CD14-positive monocyte (primary cell): ENCODE measurements at regions of chr13 and their contacts with region 1.

Region 1: GRCh38 chr13:29758531-29759114 is 91.8 kb downstream of the UBL3 start:
- DNase-seq: peak; percentile 91 to 98 (median 93)
- H3K4me3 ChIP-seq: peak overlapping the region in 1 of 3 experiments; percentile 16
- H3K4me3 Mint-ChIP-seq: peak overlapping the region in 1 of 2 donors; percentile 71
- H3K27ac ChIP-seq: peak overlapping the region in 1 of 2 donors; percentile 60
- H3K27ac Mint-ChIP-seq: peak overlapping the region; percentile 77 to 94 (median 88)
- H3K4me1 ChIP-seq: peaks cover 11 to 15% of the 10 kb centered on the region in 2 donors
- H3K4me1 Mint-ChIP-seq: peaks cover 20% of the 10 kb centered on the region
- H3K27me3 ChIP-seq: peaks cover 5 to 20% of the 10 kb centered on the region in 2 donors
- H3K27me3 Mint-ChIP-seq: peaks cover 16 to 38% (median 27%) of the 10 kb centered on the region in 3 donors
- CTCF ChIP-seq: no peak

Region 2: GRCh38 chr13:29323954-29324353 is 434.7 kb before region 1 on chr13:
- intact Hi-C with region 1: no loop called
- DNase-seq: no peak
- H3K4me3 ChIP-seq: no peak overlapping the region
- H3K4me3 Mint-ChIP-seq: no peak overlapping the region
- H3K27ac ChIP-seq: no peak overlapping the region
- H3K27ac Mint-ChIP-seq: no peak overlapping the region
- H3K4me1 ChIP-seq: no peaks in the 10 kb centered on the region
- H3K4me1 Mint-ChIP-seq: no peaks in the 10 kb centered on the region
- H3K27me3 ChIP-seq: no peaks in the 10 kb centered on the region
- H3K27me3 Mint-ChIP-seq: peaks cover 0 to 10% (median 2%) of the 10 kb centered on the region in 3 donors
- CTCF ChIP-seq: no peak

Region 3: GRCh38 chr13:29605860-29606526 is 152.6 kb before region 1 on chr13:
- intact Hi-C with region 1: loop called in 1 of 2 experiments (anchors 10 kb)
- DNase-seq: no peak
- H3K4me3 ChIP-seq: no peak overlapping the region
- H3K4me3 Mint-ChIP-seq: no peak overlapping the region
- H3K27ac ChIP-seq: no peak overlapping the region
- H3K27ac Mint-ChIP-seq: no peak overlapping the region
- H3K4me1 ChIP-seq: no peaks in the 10 kb centered on the region
- H3K4me1 Mint-ChIP-seq: no peaks in the 10 kb centered on the region
- H3K27me3 ChIP-seq: no peaks in the 10 kb centered on the region
- H3K27me3 Mint-ChIP-seq: peaks cover 5 to 10% (median 9%) of the 10 kb centered on the region in 3 donors
- CTCF ChIP-seq: no peak

Region 4: GRCh38 chr13:29621051-29621757 is 137.4 kb before region 1 on chr13:
- intact Hi-C with region 1: no loop called
- DNase-seq: peak in 1 of 3 donors; percentile 12
- H3K4me3 ChIP-seq: no peak overlapping the region
- H3K4me3 Mint-ChIP-seq: no peak overlapping the region
- H3K27ac ChIP-seq: no peak overlapping the region
- H3K27ac Mint-ChIP-seq: no peak overlapping the region
- H3K4me1 ChIP-seq: no peaks in the 10 kb centered on the region
- H3K4me1 Mint-ChIP-seq: no peaks in the 10 kb centered on the region
- H3K27me3 ChIP-seq: no peaks in the 10 kb centered on the region
- H3K27me3 Mint-ChIP-seq: peaks cover 9 to 11% (median 9%) of the 10 kb centered on the region in 3 donors
- CTCF ChIP-seq: no peak

Region 5: DNA sequence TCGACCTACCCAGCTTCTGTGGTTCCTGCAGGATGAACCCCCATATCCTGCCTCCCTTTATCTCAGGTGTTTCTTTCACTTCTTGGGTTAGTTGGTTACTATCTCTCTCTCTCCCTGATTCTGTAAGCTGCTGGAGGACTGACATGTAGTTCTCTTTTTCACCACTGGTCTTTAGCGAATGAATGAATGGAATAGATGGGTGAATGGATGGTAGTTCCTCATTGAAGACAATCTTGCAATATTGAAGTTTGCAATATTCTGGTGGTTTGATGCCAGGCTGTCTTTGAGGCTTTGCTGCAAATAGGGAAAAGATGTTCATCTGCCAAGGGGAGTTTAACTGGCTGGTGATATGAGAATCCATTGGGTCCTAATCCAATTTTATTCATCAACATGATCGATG is 28.4 kb before region 1 on chr13:
- intact Hi-C with region 1: no loop called
- DNase-seq: no peak
- H3K4me3 ChIP-seq: no peak overlapping the region
- H3K4me3 Mint-ChIP-seq: no peak overlapping the region
- H3K27ac ChIP-seq: no peak overlapping the region
- H3K27ac Mint-ChIP-seq: no peak overlapping the region
- H3K4me1 ChIP-seq: no peaks in the 10 kb centered on the region
- H3K4me1 Mint-ChIP-seq: no peaks in the 10 kb centered on the region
- H3K27me3 ChIP-seq: peaks cover 4 to 11% of the 10 kb centered on the region in 2 donors
- H3K27me3 Mint-ChIP-seq: peaks cover 17 to 33% (median 29%) of the 10 kb centered on the region in 3 donors
- CTCF ChIP-seq: peak; percentile 27

Region 6: GRCh38 chr13:29923554-29924481 is 165.2 kb after region 1 on chr13:
- intact Hi-C with region 1: loop called in 1 of 2 experiments (anchors 10 kb)
- DNase-seq: peak; percentile 42 to 73 (median 50)
- H3K4me3 ChIP-seq: no peak overlapping the region
- H3K4me3 Mint-ChIP-seq: no peak overlapping the region
- H3K27ac ChIP-seq: no peak overlapping the region
- H3K27ac Mint-ChIP-seq: peak overlapping the region in 3 of 7 donors; percentile 2 to 41 (median 3)
- H3K4me1 ChIP-seq: no peaks in the 10 kb centered on the region
- H3K4me1 Mint-ChIP-seq: peaks cover 2% of the 10 kb centered on the region
- H3K27me3 ChIP-seq: no peaks in the 10 kb centered on the region
- H3K27me3 Mint-ChIP-seq: peaks cover 0 to 2% (median 0%) of the 10 kb centered on the region in 3 donors
- CTCF ChIP-seq: peak; percentile 85

Region 7: DNA sequence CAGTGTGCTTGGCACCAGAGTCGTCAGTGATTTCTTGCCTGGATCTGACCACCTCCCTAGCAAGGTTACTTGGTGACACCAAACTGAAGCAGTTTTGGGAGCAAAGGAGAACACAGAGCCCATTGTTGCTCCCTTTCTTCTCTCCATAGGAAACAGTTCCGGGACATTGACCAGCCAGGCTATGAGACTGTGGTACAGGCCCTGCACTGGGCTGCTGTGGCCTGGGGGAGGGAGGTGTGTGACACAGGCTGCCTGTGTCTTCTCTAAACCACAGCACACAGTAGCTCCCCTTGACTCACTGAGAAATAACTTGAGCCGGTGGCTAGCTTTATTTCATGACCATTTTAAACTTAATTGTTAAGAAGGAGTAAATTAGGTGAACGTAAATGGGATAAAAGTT is 306.6 kb after region 1 on chr13:
- intact Hi-C with region 1: no loop called
- DNase-seq: no peak
- H3K4me3 ChIP-seq: no peak overlapping the region
- H3K4me3 Mint-ChIP-seq: no peak overlapping the region
- H3K27ac ChIP-seq: no peak overlapping the region
- H3K27ac Mint-ChIP-seq: no peak overlapping the region
- H3K4me1 ChIP-seq: no peaks in the 10 kb centered on the region
- H3K4me1 Mint-ChIP-seq: no peaks in the 10 kb centered on the region
- H3K27me3 ChIP-seq: no peaks in the 10 kb centered on the region
- H3K27me3 Mint-ChIP-seq: peaks cover under 1 to 4% (median 1%) of the 10 kb centered on the region in 3 donors
- CTCF ChIP-seq: no peak